Endothelial cell of umbilical vein (primary cell): ENCODE measurements at regions of chr12 and their contacts with region 1.

Region 1: DNA sequence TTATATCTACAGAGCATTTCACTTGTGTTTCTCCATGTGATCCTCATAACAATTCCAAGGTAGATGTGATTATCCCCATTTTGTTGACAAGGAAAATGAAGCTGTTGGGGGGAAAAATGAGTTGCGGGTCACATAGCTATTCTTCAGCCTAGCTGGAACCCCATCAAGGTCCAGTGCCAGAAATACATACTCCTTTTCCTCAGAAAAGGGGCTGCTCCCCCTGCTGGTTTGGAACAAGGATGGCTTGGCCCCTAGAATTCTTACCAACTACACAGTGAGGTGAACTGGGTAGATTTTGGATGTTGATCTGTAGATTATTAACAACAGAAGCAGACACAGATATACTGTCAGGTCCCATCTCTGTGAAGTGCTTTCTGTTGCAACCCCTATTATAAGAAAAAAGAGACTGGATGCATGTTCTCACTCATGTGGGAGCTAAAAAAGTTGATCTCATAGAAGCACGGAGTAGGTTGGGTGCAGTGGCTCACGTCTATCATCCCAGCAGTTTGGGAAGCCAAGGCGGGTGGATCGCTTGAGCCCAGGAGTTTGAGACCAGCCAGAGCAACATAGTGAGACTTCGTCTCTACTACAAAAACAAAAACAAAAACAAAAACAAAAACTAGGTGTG is 8.9 kb downstream of the IKZF4 start:
- DNase-seq: peak; percentile 76
- H3K4me3 ChIP-seq: peak overlapping the region in 1 of 3 experiments; percentile 38
- H3K27ac ChIP-seq: peak overlapping the region; percentile 14
- H3K4me1 ChIP-seq: peaks cover 17% of the 10 kb centered on the region
- H3K27me3 ChIP-seq: no peaks in the 10 kb centered on the region
- CTCF ChIP-seq: peak; percentile 82 to 89
- POLR2A ChIP-seq: no peak

Region 2: DNA sequence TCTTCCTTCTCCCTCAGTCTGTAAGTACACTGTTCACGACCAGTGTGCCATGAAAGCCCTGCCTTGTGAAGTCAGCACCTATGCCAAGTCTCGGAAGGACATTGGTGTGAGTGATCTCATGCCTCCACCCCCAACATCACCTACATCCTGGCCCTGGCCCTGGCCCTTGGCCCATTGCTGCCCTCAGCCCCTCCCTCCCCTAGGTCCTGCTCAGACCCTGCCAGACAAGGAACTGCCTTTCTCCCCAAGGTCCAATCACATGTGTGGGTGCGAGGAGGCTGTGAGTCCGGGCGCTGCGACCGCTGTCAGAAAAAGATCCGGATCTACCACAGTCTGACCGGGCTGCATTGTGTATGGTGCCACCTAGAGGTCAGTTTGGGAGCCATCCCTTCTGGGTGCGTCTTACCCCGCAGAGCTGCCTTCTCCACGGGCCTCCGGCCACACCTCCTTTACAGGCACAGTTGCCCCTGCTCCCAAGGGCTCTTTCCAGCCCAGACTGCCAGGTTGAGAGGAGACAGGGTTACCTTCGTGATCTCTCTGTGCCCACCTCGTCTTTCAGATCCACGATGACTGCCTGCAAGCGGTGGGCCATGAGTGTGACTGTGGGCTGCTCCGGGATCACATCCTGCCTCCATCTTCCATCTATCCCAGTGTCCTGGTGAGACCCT is 89.6 kb before region 1 on chr12:
- CTCF ChIA-PET with region 1: interaction called, 10 read pairs
- POLR2A ChIA-PET with region 1: no interaction called
- dilution Hi-C with region 1: no loop called
- intact Hi-C with region 1: no loop called
- DNase-seq: peak; percentile 85
- H3K4me3 ChIP-seq: no peak overlapping the region
- H3K27ac ChIP-seq: no peak overlapping the region
- H3K4me1 ChIP-seq: no peaks in the 10 kb centered on the region
- H3K27me3 ChIP-seq: no peaks in the 10 kb centered on the region
- CTCF ChIP-seq: peak; percentile 89 to 98
- POLR2A ChIP-seq: no peak

Region 3: DNA sequence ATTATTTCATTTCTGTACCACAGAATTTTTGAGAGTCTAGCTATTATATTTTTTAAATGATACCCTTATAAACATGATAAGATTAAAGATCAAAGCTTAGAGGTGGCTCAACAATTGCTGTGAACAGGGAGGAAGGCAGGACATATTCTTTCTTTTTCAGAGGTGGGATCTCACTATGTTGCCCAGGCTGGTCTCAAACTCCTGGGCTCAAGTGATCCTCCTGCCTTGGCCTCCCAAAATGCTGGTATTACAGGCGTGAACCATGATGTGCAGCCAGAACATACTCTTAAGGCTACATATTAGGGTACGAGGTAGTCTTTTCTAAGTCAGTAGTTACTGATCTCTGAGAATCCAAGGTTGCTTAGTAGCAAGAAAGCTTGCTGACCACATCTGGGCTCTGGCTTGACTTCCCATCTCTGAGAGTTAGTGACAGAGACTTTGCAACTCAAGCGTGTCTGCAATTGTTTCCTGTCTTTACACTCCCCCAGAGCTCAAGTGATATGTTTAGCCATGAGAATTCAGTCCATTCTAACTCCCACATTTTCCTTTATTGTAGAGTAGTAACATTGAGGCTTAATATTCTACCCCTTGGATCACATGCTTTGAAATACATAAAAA is 47.4 kb before region 1 on chr12:
- CTCF ChIA-PET with region 1: interaction called, 18 read pairs
- POLR2A ChIA-PET with region 1: no interaction called
- dilution Hi-C with region 1: no loop called
- intact Hi-C with region 1: no loop called
- DNase-seq: no peak
- H3K4me3 ChIP-seq: no peak overlapping the region
- H3K27ac ChIP-seq: no peak overlapping the region
- H3K4me1 ChIP-seq: peaks cover 5% of the 10 kb centered on the region
- H3K27me3 ChIP-seq: no peaks in the 10 kb centered on the region
- CTCF ChIP-seq: no peak
- POLR2A ChIP-seq: no peak

Region 4: GRCh38 chr12:56007564-56008559 is 21.9 kb before region 1 on chr12:
- CTCF ChIA-PET with region 1: interaction called, 48 read pairs
- POLR2A ChIA-PET with region 1: no interaction called
- dilution Hi-C with region 1: no loop called
- intact Hi-C with region 1: loop called (anchors 2 kb)
- DNase-seq: peak; percentile 37
- H3K4me3 ChIP-seq: peak overlapping the region; percentile 53 to 74 (median 53)
- H3K27ac ChIP-seq: no peak overlapping the region
- H3K4me1 ChIP-seq: peaks cover 5% of the 10 kb centered on the region
- H3K27me3 ChIP-seq: no peaks in the 10 kb centered on the region
- CTCF ChIP-seq: no peak
- POLR2A ChIP-seq: no peak

Region 5: DNA sequence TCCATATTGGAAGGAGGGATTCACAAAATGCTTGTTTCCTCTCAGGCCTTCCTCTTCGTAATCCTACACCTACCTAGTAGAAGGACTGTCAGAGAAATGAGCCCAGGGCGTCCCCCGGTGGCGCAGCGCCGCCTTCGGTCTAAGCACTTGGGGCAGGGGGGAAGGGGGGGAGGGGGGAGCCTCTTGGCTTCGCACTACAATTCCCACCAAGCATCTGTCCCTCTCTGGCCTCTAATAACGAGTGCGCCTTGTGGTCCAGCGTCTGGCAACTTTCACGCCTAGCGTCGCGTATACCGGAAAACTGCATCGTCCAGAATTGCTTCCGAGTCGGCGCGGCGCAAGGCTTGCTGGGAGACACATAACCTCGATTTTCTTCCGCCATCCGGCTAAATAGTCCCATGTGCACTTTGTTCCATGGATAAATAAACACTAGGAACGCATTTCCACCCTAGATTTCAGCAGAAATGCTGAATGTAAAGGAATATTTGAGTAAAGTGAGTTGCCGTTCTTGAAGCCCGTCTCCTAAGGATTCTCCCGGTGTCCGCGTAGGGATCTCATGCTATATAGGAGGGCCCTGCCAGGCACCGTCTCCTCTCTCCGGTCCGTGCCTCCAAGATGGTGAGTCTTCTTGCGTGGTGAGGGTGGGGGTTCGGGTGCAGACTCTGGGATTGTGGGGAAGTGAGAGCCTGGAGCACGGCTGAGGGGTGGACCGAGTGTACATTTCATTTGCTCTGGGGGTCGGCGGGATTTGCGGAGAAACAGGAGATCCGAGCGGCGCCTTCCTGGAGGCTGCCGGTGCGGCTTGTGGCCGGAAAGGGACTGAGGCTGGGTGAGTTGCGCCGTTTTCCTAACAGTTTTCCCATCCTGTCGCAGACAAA is 12.0 kb after region 1 on chr12 and contains the start of gene RPS26:
- CTCF ChIA-PET with region 1: interaction called, 16 read pairs
- POLR2A ChIA-PET with region 1: interaction called, 4 read pairs
- dilution Hi-C with region 1: no loop called
- intact Hi-C with region 1: loop called (anchors 1 kb)
- DNase-seq: peak; percentile 100
- H3K4me3 ChIP-seq: peak within 1 kb of the TSS; percentile 84 to 100 (median 87)
- H3K27ac ChIP-seq: peak within 1 kb of the TSS; percentile 95
- H3K4me1 ChIP-seq: peaks cover 17% of the 10 kb centered on the region
- H3K27me3 ChIP-seq: no peaks in the 10 kb centered on the region
- CTCF ChIP-seq: peak in 1 of 2 donors; percentile 46
- POLR2A ChIP-seq: peak; percentile 99
- total RNA-seq, gene RPS26: 57.3 and 66.7 TPM in 2 replicates

Region 6: DNA sequence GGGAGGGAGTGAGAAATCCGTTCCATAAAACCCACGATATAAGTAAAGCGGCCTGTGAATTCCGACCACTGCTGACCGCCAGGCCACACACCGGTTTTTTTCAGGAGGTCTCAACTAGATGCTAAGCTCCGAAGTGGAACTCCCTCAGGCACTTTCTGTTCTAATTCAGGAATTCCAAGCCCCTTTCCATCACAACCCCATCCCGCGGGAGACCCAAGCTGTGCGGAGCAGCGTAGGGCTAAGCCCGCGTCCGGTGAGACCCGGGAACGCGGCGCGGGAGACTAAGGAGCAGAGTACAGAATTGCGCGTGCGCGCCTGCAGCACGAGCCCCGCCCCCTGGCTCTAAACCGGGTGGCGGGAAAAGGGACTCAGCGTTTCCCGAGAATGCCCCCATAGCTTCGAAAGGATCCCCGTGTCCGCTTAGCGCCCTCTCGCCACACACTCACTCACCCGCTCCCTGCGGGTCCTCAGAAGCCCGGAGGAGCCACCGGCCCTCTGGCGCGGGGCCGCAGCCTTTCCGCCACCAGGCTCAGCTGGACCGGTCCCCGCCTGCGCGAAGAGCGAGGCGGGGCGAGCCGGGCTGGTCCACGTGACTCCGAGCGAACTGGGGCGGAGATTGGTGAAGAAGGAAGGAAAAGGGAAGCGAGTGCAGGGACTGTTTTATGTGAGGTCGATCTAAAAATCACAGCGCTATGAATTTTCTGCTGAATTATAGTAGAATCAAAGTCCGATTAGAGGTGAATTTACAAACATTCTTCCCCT is 419.3 kb after region 1 on chr12 and contains the start of gene TIMELESS:
- CTCF ChIA-PET with region 1: no interaction called
- POLR2A ChIA-PET with region 1: no interaction called
- dilution Hi-C with region 1: no loop called
- intact Hi-C with region 1: no loop called
- DNase-seq: peak; percentile 94
- H3K4me3 ChIP-seq: peak within 1 kb of the TSS; percentile 53 to 88 (median 77)
- H3K27ac ChIP-seq: peak within 1 kb of the TSS; percentile 61
- H3K4me1 ChIP-seq: peaks cover 20% of the 10 kb centered on the region
- H3K27me3 ChIP-seq: peaks cover 0 to 3% of the 10 kb centered on the region in 2 experiments
- CTCF ChIP-seq: no peak
- POLR2A ChIP-seq: peak; percentile 84
- total RNA-seq, gene TIMELESS: 28.2 and 28.4 TPM in 2 replicates